CD4-positive, alpha-beta memory T cell (primary cell): ENCODE measurements at regions of chr5 and their contacts with region 1.

Region 1: GRCh38 chr5:136182618-136183017 is 10.3 kb downstream of the SMIM32 start:
- DNase-seq: no peak
- H3K4me3 ChIP-seq: no peak overlapping the region
- H3K4me3 Mint-ChIP-seq: no peak overlapping the region
- H3K27ac ChIP-seq: no peak overlapping the region
- H3K27ac Mint-ChIP-seq: no peak overlapping the region
- H3K4me1 ChIP-seq: no peaks in the 10 kb centered on the region
- H3K4me1 Mint-ChIP-seq: no peaks in the 10 kb centered on the region
- H3K27me3 ChIP-seq: no peaks in the 10 kb centered on the region
- H3K27me3 Mint-ChIP-seq: peaks cover 2% of the 10 kb centered on the region in 2 donors

Region 2: GRCh38 chr5:136141561-136141960 is 41.1 kb before region 1 on chr5:
- CTCF ChIA-PET with region 1: no interaction called
- POLR2A ChIA-PET with region 1: no interaction called
- intact Hi-C with region 1: no loop called
- DNase-seq: no peak
- H3K4me3 ChIP-seq: no peak overlapping the region
- H3K4me3 Mint-ChIP-seq: no peak overlapping the region
- H3K27ac ChIP-seq: no peak overlapping the region
- H3K27ac Mint-ChIP-seq: no peak overlapping the region
- H3K4me1 ChIP-seq: no peaks in the 10 kb centered on the region
- H3K4me1 Mint-ChIP-seq: peaks cover 20 to 33% (median 26%) of the 10 kb centered on the region in 4 donors
- H3K27me3 ChIP-seq: no peaks in the 10 kb centered on the region
- H3K27me3 Mint-ChIP-seq: no peaks in the 10 kb centered on the region

Region 3: GRCh38 chr5:136161998-136162397 is 20.6 kb before region 1 on chr5:
- CTCF ChIA-PET with region 1: interaction called, 3 read pairs
- POLR2A ChIA-PET with region 1: no interaction called
- intact Hi-C with region 1: loop called (anchors 2 kb)
- DNase-seq: no peak
- H3K4me3 ChIP-seq: no peak overlapping the region
- H3K4me3 Mint-ChIP-seq: no peak overlapping the region
- H3K27ac ChIP-seq: no peak overlapping the region
- H3K27ac Mint-ChIP-seq: no peak overlapping the region
- H3K4me1 ChIP-seq: no peaks in the 10 kb centered on the region
- H3K4me1 Mint-ChIP-seq: peaks cover 0 to 7% (median 4%) of the 10 kb centered on the region in 4 donors
- H3K27me3 ChIP-seq: no peaks in the 10 kb centered on the region
- H3K27me3 Mint-ChIP-seq: no peaks in the 10 kb centered on the region